ENCODE measurements at regions of chr16 and their contacts with region 1.

Region 1: DNA sequence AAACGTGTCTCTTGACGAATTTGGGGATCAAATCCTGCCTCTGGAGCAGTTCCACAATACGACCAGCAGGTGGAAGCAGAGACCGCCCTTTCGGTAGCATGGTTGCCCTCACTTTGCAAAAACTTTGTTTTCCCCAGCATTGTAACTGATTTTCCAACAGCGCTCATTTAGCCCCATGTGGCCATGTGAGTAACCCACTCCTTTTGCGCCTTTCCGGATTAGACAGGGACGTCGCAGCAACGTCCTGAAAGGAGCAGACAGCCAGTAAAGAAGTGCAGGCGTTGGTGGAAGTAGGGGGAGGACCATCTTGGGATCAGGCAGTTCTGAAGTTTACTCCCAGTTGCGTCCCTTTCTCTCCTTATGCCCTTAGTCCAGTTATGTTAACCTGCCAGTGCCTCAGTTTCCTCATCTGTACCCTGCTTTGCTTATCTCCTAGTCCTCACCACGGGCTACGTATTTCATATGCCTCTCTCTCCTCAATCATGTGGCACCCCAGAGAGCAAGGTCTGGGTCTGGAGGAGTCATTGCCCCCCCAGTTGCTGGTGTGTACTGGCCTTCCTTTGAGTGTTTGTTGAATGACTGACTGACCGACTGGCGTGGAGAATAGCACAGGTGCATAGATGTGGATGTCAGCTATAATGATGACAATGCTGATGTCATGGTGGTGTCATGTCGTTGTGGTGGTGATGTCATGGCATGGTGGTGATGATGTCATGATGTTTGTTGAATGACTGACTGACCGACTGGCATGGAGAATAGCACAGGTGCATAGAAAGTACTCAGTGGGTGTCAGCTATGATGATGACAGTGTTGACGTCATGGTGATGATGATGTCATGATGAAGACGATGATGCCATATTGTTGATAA is 22.3 kb downstream of the TMEM114 start:
- DNase-seq: peak; percentile 87
- H3K4me3 Mint-ChIP-seq: no peak overlapping the region
- H3K27ac Mint-ChIP-seq: no peak overlapping the region
- H3K4me1 Mint-ChIP-seq: peaks cover 1% of the 10 kb centered on the region
- H3K27me3 Mint-ChIP-seq: peaks cover 12% of the 10 kb centered on the region

Region 2: DNA sequence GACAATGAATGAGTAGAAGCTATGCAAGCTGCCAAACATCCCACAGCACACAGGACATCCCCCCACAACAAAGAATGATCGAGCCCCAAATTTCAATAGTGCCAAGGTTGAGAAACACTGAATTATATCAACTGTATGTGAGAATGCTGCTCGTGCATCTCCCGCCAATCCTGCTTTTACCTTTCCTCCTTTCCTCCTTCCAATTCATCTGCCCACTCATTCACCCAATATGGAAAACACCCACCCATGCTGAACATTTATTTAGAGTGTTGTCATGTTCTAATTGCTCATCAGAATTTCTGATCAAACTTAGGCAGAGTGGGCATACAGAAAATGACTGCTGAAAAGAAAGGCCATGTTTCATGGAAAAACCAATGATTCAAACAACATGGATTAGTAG is 160.6 kb before region 1 on chr16:
- CTCF ChIA-PET with region 1: no interaction called
- intact Hi-C with region 1: no loop called
- DNase-seq: no peak
- H3K4me3 Mint-ChIP-seq: no peak overlapping the region
- H3K27ac Mint-ChIP-seq: no peak overlapping the region
- H3K4me1 Mint-ChIP-seq: no peaks in the 10 kb centered on the region
- H3K27me3 Mint-ChIP-seq: no peaks in the 10 kb centered on the region

Region 3: DNA sequence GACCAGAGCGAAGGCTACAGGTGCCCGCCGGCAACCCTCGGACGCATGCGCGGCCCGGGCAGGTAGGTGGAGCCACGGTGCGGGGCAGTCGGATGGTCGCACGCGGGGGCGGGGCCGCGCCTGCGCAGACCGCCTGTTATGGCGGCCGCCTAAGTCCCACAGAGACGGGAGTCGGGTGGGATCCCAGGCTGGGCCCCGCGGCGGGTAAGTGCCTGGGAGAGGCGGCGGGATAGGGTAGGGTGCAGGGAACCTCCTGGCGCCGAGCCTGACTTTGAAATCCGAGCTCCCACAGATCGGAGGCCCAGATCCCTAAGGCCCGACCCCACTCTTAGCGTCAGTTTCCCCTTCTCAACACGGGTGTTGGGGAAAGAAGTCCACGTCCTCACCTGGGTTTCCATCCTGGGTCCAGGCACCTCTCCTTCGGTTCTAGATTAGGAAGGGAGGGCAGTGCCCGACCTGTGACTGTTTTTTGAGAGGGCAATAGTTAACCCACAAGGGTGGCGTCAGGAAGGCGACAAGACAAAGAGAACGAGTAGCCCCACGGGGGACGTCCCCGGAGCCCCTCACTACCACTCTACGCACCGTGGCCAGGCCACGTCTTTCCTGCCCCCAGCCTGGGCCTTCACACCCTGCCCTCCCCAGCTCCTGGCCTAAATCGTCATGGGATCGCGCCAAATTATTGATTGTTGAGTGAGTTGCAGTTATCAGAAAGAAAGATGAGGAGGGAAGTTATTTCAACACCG is 53.8 kb after region 1 on chr16 and contains the start of gene METTL22:
- CTCF ChIA-PET with region 1: interaction called, 4 read pairs
- intact Hi-C with region 1: loop called (anchors 2 kb)
- DNase-seq: peak; percentile 92
- H3K4me3 Mint-ChIP-seq: peak within 1 kb of the TSS; percentile 97
- H3K27ac Mint-ChIP-seq: peak within 1 kb of the TSS; percentile 70
- H3K4me1 Mint-ChIP-seq: peaks cover 27% of the 10 kb centered on the region
- H3K27me3 Mint-ChIP-seq: no peaks in the 10 kb centered on the region
- total RNA-seq, gene METTL22: 43.2 to 48.4 TPM

Region 4: DNA sequence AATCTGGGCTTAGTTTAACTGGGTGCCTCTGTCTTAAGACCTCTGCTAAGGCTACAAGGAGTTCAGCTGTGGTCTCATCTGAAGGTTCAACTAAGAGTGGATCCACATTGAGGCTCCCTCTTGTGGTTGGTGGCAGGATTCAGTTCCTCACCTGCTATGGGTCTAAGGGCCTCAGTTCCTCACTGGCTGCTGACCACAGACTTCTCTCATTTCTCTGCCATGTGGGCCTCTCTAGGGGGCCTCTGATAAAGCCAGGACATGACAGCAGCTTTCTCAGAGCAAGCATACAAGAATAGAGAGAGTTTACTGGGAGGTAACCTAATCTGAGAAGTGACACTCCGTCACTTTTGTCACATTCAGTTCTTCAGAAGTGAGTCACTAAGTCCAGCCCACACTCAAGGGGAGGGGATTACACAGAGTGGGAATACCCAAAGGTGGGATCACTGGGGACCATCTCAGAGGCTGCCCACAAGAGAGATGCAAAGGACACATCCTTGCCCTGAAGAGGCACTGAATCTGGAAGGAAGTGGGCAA is 87.3 kb after region 1 on chr16:
- CTCF ChIA-PET with region 1: interaction called, 19 read pairs
- intact Hi-C with region 1: loop called (anchors 1 kb)
- DNase-seq: peak; percentile 66
- H3K4me3 Mint-ChIP-seq: no peak overlapping the region
- H3K27ac Mint-ChIP-seq: no peak overlapping the region
- H3K4me1 Mint-ChIP-seq: peaks cover 5% of the 10 kb centered on the region
- H3K27me3 Mint-ChIP-seq: no peaks in the 10 kb centered on the region

Region 5: GRCh38 chr16:8868416-8869211 is 300.6 kb after region 1 on chr16 and contains the start of gene CARHSP1:
- CTCF ChIA-PET with region 1: interaction called, 5 read pairs
- intact Hi-C with region 1: loop called (anchors 5 kb)
- DNase-seq: peak; percentile 81
- H3K4me3 Mint-ChIP-seq: peak within 1 kb of the TSS; percentile 89
- H3K27ac Mint-ChIP-seq: peak within 1 kb of the TSS; percentile 83
- H3K4me1 Mint-ChIP-seq: peaks cover 36% of the 10 kb centered on the region
- H3K27me3 Mint-ChIP-seq: no peaks in the 10 kb centered on the region
- total RNA-seq, gene CARHSP1: 46.5 to 49.6 TPM

Region 6: DNA sequence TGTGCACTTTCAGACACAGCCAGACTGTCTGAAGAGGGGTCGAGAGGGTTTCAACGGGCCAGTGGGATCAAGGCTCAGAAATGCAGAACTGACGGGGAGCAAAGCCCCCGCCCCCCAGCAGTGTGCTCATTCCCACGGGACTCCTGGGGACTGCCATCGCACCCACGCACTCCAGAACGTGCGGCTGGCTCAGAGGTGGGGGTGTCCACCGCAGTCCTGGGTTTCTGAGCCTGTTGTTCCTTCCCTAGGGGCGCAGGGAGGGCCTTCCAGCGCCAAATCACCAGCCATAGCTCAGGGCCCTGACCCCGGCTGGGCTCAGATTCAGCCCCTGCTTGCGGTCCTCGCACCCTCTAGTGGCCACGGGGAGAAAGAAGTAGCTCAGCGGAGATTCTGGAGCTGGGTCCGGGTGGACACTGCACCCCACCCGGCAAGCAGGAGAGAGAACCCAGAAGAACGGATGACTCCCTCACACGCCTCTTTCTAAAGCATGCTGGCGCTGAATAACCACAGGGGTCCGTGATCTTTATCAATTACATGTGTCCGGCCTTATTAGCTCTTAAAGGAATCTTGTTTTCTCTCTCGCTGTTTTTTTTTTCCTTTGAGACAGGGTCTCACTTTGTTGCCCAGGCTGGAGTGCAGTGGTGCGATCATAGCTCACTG is 440.7 kb after region 1 on chr16:
- CTCF ChIA-PET with region 1: interaction called, 3 read pairs
- intact Hi-C with region 1: loop called (anchors 10 kb)
- DNase-seq: peak; percentile 78
- H3K4me3 Mint-ChIP-seq: no peak overlapping the region
- H3K27ac Mint-ChIP-seq: no peak overlapping the region
- H3K4me1 Mint-ChIP-seq: peaks cover 4% of the 10 kb centered on the region
- H3K27me3 Mint-ChIP-seq: peaks cover 9% of the 10 kb centered on the region

Region 7: GRCh38 chr16:9134739-9135138 is 566.8 kb after region 1 on chr16:
- CTCF ChIA-PET with region 1: interaction called, 5 read pairs
- intact Hi-C with region 1: loop called (anchors 1 kb)
- DNase-seq: peak; percentile 85
- H3K4me3 Mint-ChIP-seq: no peak overlapping the region
- H3K27ac Mint-ChIP-seq: no peak overlapping the region
- H3K4me1 Mint-ChIP-seq: peaks cover 7% of the 10 kb centered on the region
- H3K27me3 Mint-ChIP-seq: peaks cover 4% of the 10 kb centered on the region

Measured in activated naive CD4-positive, alpha-beta T cell treated with anti-CD3 and anti-CD28 coated beads for 36 hours (primary cell).